Prostate gland (tissue), 2 donors: ENCODE measurements at regions of chr2 and their contacts with region 1.

Region 1: DNA sequence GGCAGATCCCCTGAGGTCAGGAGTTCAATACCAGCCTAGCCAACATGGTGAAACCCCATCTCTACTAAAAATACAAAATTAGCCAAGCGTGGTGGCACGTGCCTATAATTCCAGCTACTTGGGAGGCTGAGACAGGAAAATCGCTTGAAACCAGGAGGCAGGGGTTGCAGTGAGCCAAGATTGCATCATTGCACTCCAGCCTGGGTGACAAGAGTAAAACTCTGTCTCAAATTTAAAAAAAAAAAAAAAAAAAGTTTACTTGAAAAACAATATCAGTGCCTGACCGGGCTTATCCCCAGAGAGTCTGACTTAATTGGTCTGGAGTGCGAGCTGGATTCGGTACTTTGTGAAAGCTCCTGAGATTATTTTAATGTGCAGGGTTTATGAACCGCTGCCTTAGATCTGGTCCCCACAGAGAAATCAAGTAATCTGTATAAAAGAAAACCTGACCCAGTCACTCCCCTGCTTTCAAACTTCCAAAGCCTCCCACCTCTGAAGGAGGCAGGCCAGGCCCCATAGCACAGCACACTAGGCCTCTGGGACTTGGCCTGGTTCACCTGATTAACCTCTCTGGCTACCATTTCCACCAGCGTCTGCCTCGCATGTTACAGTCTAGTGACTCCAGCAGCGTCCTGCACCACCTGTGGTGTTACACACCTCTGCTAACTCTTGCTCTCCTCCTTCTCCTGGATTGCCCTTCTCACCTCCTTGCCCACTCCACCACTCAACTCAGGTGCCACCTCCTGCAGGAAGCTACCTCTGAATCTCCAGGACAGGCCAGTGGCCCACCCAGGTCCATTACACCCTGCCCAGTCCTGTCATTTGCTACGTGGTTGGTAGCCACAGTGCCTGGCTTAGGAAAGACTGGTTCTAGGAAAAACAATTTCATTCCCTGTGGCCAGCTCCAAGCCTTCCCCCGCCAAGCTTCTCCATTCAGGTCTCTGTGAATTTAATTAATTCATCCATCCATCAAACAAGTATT is 114.3 kb upstream of the PPP1CB start:
- DNase-seq: no peak
- H3K4me3 ChIP-seq: no peak overlapping the region
- H3K27ac ChIP-seq: peak overlapping the region; percentile 79 to 86
- H3K4me1 ChIP-seq: peaks cover 8% of the 10 kb centered on the region
- H3K27me3 ChIP-seq: no peaks in the 10 kb centered on the region
- CTCF ChIP-seq: no peak
- POLR2A ChIP-seq: no peak

Region 2: GRCh38 chr2:28452534-28453081 is 184.7 kb before region 1 on chr2:
- intact Hi-C with region 1: no loop called
- DNase-seq: peak; percentile 58
- H3K4me3 ChIP-seq: no peak overlapping the region
- H3K27ac ChIP-seq: no peak overlapping the region
- H3K4me1 ChIP-seq: no peaks in the 10 kb centered on the region
- H3K27me3 ChIP-seq: no peaks in the 10 kb centered on the region
- CTCF ChIP-seq: peak; percentile 81 to 90 (median 86)
- POLR2A ChIP-seq: no peak

Region 3: DNA sequence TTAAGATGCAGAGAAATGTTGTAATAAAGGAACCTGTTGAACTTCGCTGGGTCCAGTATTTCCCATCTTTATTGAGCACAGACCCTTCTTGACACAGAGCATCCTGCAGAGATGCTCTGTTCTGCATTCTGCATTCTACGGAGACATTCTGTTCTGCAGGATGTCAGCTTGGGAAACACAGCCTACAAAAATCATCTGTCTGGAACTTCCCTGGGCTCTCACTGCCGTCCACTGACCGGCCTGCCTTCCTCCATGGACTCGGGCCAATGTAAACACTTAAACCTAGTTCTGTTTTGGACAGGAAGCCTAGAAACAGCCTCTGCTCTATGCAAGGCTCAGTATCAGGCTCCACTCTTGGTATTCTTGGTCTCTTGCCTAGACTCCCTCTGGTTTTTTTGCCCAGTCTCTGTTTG is 24.2 kb after region 1 on chr2:
- intact Hi-C with region 1: loop called (anchors 1 kb)
- DNase-seq: peak; percentile 73
- H3K4me3 ChIP-seq: no peak overlapping the region
- H3K27ac ChIP-seq: peak overlapping the region; percentile 66 to 68
- H3K4me1 ChIP-seq: peaks cover 2% of the 10 kb centered on the region
- H3K27me3 ChIP-seq: no peaks in the 10 kb centered on the region
- CTCF ChIP-seq: no peak
- POLR2A ChIP-seq: no peak